Heart left ventricle (tissue), 16 donors: ENCODE measurements at regions of chr21 and their contacts with region 1.

Region 1: GRCh38 chr21:35084869-35085268 is 35.8 kb upstream of the RUNX1 start:
- DNase-seq: no peak
- ATAC-seq: peak in 1 of 4 donors; percentile 39
- H3K4me3 ChIP-seq: no peak overlapping the region
- H3K27ac ChIP-seq: no peak overlapping the region
- H3K4me1 ChIP-seq: peaks cover 0 to 10% (median 0%) of the 10 kb centered on the region in 12 donors
- H3K27me3 ChIP-seq: no peaks in the 10 kb centered on the region
- CTCF ChIP-seq: no peak
- POLR2A ChIP-seq: no peak

Region 2: DNA sequence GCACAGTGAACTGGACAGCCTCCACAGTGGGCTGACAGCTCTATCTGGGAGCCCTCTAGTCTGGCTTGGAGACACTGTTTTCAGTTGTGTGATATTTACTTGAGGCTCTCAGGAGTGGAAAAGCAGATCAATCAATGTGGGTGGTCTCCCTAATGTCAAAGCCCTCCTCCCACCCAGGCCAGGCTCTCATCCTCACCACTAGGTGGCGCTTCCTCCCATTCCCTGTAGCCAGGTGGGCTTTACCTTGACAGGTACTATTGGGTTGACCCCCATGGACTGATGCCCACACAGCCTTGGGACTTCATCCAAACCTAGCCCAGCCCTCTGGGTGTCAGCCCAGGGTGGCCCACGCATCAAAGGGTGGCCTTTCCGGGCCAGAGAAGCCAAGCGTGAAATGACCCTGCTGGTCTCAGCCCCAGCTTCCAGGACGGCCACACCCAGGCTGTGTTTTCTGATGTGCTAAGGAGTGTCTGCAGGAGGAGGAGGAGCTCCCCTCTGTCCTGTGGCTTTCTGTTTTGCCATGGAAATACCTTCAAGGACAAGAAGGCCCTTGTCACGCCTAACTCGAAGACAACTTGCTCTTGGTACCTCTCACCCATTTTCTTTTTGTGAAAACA is 362.1 kb before region 1 on chr21:
- intact Hi-C with region 1: no loop called
- DNase-seq: no peak
- ATAC-seq: no peak
- H3K4me3 ChIP-seq: no peak overlapping the region
- H3K27ac ChIP-seq: no peak overlapping the region
- H3K4me1 ChIP-seq: peaks cover 0 to 7% (median 0%) of the 10 kb centered on the region in 12 donors
- H3K27me3 ChIP-seq: peaks cover 0 to 16% (median 0%) of the 10 kb centered on the region in 9 donors
- CTCF ChIP-seq: peak in 8 of 12 donors; percentile 14 to 36 (median 32)
- POLR2A ChIP-seq: no peak

Region 3: DNA sequence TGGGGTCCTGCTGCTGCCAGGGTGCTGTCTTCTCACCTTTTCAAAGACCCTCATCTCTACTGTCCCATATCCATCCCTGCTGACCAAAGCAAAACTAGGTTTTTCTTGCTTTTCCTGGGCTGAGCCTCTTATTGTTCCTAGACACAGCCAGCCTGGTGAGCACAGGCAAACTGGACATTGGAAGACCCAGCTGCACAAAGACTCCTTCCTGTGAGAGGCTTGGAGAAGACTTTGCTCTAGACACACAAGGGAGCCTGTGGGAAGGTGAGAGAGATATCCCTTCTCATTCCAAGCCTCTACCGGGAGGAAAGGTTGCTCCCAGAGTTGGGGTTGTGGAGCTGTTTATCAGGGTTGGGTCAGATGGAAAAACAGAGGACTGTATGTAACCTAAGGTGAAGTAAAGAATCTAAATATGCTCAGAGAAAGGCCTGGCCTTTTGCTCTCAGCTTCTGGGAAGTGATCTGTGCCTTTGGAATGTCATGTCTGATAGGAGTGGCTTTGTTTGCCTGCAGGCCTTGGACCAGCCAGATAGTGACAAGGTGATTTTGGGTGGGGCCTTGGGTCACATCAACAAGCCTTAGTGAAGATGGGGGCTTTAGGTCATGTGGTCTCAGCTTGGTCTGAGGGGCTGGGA is 51.8 kb after region 1 on chr21:
- intact Hi-C with region 1: no loop called
- DNase-seq: no peak
- ATAC-seq: peak in 3 of 4 donors; percentile 42 to 59 (median 58)
- H3K4me3 ChIP-seq: no peak overlapping the region
- H3K27ac ChIP-seq: no peak overlapping the region
- H3K4me1 ChIP-seq: peaks cover 0 to 11% (median 0%) of the 10 kb centered on the region in 12 donors
- H3K27me3 ChIP-seq: no peaks in the 10 kb centered on the region
- CTCF ChIP-seq: no peak
- POLR2A ChIP-seq: no peak

Region 4: DNA sequence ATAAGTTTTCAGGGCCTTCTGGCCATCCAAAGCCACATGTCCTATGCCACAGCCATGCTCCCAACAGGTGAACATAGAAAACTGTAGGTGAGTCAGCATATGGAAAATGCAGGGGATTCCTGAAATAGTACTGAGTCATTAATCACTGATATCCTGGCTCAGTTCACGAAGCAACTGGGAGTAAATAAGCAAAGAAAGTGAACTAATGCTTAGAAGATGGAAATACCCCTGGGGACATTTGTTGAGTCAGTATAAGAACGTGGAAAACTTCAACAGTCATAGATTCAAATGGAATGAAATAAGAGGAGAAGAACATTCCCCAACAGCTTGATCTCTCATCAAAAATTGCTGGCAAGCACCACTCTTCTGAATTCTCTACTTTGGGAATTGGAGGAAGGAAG is 113.2 kb after region 1 on chr21:
- intact Hi-C with region 1: loop called in 1 of 10 experiments (anchors 10 kb)
- DNase-seq: peak in 1 of 5 donors; percentile 29
- ATAC-seq: peak; percentile 65 to 95 (median 80)
- H3K4me3 ChIP-seq: no peak overlapping the region
- H3K27ac ChIP-seq: peak overlapping the region in 8 of 12 donors; percentile 32 to 76 (median 58)
- H3K4me1 ChIP-seq: peaks cover 0 to 19% (median 2%) of the 10 kb centered on the region in 12 donors
- H3K27me3 ChIP-seq: no peaks in the 10 kb centered on the region
- CTCF ChIP-seq: no peak
- POLR2A ChIP-seq: no peak